SK-N-SH (cell line): ENCODE measurements at regions of chr11 and their contacts with region 1.

Region 1: GRCh38 chr11:9015677-9016076 is 11.9 kb upstream of the NRIP3 start:
- DNase-seq: peak; percentile 76
- H3K4me3 ChIP-seq: no peak overlapping the region; a peak in 1 of 4 replicates
- H3K27ac ChIP-seq: no peak overlapping the region
- H3K4me1 ChIP-seq: peaks cover 0 to 2% of the 10 kb centered on the region in 2 experiments; a peak in 2 of 4 replicates
- H3K27me3 ChIP-seq: no peaks in the 10 kb centered on the region
- CTCF ChIP-seq: peak; percentile 75
- EP300 ChIP-seq: no peak
- RAD21 ChIP-seq: peak; percentile 79

Region 2: DNA sequence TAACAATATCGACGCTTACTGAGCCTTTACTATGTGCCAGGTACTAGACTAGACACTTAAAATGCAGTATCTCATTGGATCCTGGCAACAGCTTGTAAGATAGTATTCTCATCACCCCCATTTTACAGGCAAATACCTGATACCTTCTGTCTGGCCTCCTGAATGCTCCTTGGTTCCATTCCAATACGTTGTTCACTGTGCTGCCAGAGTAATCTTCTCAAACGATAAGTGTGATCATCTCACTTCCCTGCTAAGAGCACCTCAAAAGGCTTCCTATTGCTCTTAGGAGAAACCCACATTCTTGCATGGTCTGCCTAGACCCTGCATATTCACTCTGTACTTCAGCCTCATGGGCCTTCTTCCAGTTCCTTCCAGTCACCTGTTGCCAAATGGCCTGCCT is 10.6 kb before region 1 on chr11:
- CTCF ChIA-PET with region 1: interaction called, 28 read pairs
- POLR2A ChIA-PET with region 1: no interaction called
- DNase-seq: no peak
- H3K4me3 ChIP-seq: no peak overlapping the region
- H3K27ac ChIP-seq: no peak overlapping the region
- H3K4me1 ChIP-seq: peaks cover 7 to 8% of the 10 kb centered on the region in 2 experiments; a peak in 2 of 4 replicates
- H3K27me3 ChIP-seq: peaks cover 8% of the 10 kb centered on the region; the same call in 1 of the 2 replicates
- CTCF ChIP-seq: no peak
- EP300 ChIP-seq: no peak
- RAD21 ChIP-seq: no peak

Region 3: GRCh38 chr11:9046481-9046880 is 30.8 kb after region 1 on chr11:
- CTCF ChIA-PET with region 1: interaction called, 13 read pairs
- POLR2A ChIA-PET with region 1: no interaction called
- DNase-seq: no peak
- H3K4me3 ChIP-seq: no peak overlapping the region
- H3K27ac ChIP-seq: no peak overlapping the region
- H3K4me1 ChIP-seq: no peaks in the 10 kb centered on the region; a peak in 1 of 4 replicates
- H3K27me3 ChIP-seq: no peaks in the 10 kb centered on the region
- CTCF ChIP-seq: no peak
- EP300 ChIP-seq: no peak
- RAD21 ChIP-seq: no peak

Region 4: DNA sequence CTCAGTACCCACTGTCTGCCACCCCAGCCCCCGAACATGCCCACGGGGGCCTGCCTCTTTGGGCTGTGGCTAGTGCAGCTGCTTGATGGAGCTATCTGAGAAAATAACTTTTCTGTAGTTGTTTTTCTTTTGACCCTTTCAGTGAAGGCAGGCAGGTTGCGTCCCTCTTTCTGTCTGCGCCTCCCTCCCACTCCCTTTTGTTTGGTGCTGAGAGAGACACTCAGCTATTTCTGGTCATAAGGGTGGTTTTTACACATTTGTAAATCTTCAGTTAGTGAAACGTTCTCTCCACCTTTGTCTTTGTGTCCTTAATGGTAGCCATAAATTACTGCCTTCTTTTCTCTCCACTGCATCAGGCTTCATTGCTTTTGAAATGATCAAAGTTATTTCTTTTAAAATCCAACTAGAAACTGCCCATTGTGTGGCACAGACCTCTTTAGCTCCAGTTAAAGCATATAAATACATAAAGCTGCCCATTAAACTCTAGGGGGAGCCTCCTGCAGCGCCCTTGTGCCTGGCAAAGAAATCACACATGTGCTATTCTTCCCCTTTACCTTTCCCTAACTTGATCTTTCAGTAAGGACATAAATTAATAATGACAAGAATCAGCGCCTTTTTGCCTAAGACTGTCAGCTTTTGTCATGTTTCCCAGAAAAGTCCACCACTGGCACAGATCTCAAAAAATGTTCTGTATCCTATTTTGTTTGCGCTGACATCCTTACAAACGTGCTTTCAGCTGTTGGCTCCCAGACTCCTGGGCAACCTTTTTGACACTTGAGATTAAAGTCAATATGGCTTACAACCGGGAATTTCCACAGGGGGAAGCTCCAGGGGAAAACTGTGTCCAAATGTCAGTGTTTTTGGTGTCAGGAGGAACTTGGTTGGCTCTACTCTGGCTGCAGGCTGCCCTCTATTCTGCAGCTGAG is 77.4 kb after region 1 on chr11:
- CTCF ChIA-PET with region 1: interaction called, 48 read pairs
- POLR2A ChIA-PET with region 1: no interaction called
- DNase-seq: peak; percentile 58
- H3K4me3 ChIP-seq: no peak overlapping the region
- H3K27ac ChIP-seq: no peak overlapping the region
- H3K4me1 ChIP-seq: peaks cover 0 to 16% of the 10 kb centered on the region in 2 experiments; a peak in 2 of 4 replicates
- H3K27me3 ChIP-seq: no peaks in the 10 kb centered on the region
- CTCF ChIP-seq: peak; percentile 41
- EP300 ChIP-seq: no peak
- RAD21 ChIP-seq: peak; percentile 42; the same call in 1 of the 2 replicates

Region 5: DNA sequence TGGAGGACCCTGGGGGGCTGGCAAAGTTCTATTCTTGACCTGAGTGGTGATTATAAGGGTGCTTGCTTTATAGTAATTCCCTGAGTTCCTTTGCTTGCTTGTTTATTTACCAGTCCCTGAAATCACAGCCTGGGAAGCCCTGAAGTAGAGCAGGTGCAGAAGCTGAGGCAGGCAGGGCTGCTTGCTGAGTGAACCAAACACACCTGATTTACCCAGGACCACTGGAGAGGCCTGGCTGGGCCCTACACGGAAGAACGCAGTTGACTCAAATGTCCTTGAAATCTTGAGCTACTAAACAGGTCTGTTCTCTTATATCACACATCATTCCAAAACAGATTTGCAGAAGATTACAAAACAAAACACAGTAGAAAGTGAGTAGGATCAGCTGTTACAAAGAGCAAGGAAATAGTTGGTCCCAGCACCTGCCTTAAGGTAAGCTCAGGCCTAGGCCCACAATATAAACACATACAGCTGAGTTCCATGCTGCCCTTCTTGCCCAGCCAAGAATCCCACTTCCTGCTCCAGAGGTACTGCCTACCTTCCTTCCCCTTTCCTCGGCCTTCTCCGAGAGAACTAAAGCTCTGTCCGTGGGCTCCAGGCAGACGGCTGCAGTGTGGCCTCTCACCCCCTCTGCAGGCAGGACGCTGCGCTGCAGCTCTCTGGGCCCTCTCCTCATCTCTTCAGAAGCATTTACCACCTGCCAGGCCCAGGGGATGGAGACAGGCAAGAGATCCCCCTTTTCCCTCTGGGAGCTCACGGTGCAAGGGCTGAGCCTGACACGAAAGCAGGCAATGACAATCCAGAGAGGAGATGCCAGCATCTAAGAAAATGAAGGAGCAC is 121.8 kb after region 1 on chr11:
- CTCF ChIA-PET with region 1: interaction called, 205 read pairs
- POLR2A ChIA-PET with region 1: interaction called, 7 read pairs
- DNase-seq: peak; percentile 77
- H3K4me3 ChIP-seq: no peak overlapping the region; a peak in 1 of 4 replicates
- H3K27ac ChIP-seq: no peak overlapping the region
- H3K4me1 ChIP-seq: peaks cover 0 to 24% of the 10 kb centered on the region in 2 experiments; a peak in 3 of 4 replicates
- H3K27me3 ChIP-seq: no peaks in the 10 kb centered on the region
- CTCF ChIP-seq: peak; percentile 90
- EP300 ChIP-seq: no peak
- RAD21 ChIP-seq: peak; percentile 92

Region 6: DNA sequence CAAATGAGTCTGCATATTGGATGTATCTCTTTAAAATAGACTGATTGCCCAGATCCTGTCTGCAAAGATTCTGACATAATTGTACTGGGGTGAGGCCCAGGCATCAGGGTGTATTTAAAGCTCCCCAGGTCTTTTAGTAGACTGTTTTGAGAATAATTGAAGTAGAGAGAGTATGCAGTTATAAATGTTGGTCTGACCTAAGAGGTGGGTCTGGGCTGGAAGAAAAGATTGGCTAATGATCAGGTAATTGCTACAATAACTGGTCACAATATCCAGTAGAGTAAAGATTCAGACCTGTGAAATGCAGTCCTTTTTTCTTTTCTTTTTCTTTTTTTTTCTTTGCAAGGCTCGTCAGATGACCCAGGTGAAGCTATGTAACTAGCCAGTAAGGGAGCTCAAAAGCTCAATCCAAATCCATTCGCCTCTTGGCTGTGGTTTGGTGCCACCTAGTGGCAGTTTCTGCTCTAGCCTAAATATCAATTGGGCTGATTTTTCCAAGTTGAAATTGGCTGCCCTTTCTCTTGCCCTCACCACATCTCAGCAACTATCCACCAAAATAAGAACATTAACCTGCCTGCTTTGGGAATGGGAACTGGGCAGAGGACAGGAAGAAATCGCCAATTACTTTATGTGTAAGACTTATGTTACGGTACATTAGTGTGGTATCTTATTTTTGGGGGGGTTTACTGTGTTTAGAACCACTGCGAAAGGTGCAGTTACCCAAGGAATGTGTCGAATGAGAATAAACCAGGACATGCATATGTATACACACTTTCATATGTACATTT is 491.0 kb after region 1 on chr11:
- CTCF ChIA-PET with region 1: interaction called, 22 read pairs
- POLR2A ChIA-PET with region 1: no interaction called
- DNase-seq: peak; percentile 71
- H3K4me3 ChIP-seq: no peak overlapping the region; a peak in 1 of 4 replicates
- H3K27ac ChIP-seq: peak overlapping the region in 1 of 2 experiments; percentile 6; a peak in 1 of 4 replicates
- H3K4me1 ChIP-seq: no peaks in the 10 kb centered on the region
- H3K27me3 ChIP-seq: no peaks in the 10 kb centered on the region
- CTCF ChIP-seq: peak; percentile 97
- EP300 ChIP-seq: no peak
- RAD21 ChIP-seq: peak; percentile 95